Activated CD4-positive, alpha-beta T cell treated with anti-CD3 and anti-CD28 coated beads for 36 hours (primary cell): ENCODE measurements at regions of chr20 and their contacts with region 1.

Region 1: DNA sequence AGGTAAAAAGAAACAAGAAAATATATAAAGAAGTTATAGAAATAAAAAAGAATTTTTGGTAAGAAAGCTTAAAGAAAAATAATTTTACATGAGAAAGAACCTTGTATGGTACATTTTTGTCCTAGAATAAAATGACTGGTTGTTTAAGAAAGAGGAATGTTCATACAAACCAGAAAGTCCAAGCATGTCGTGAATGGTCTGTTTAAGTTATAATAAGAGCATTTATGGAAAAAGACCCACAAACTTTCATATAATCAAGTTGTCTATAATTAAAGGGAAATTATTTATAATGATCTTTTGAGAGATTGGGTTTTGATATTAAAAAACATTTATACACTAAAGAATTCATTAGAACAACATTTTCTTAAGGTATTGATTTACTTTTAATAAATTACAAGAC is 27.8 kb upstream of the FAM110A start:
- DNase-seq: no peak
- ATAC-seq: no peak
- H3K4me3 Mint-ChIP-seq: no peak overlapping the region
- H3K27ac Mint-ChIP-seq: no peak overlapping the region
- H3K4me1 Mint-ChIP-seq: no peaks in the 10 kb centered on the region
- H3K27me3 Mint-ChIP-seq: peaks cover 14% of the 10 kb centered on the region

Region 2: GRCh38 chr20:956330-956951 is 150.7 kb after region 1 on chr20:
- CTCF ChIA-PET with region 1: interaction called, 28 read pairs
- POLR2A ChIA-PET with region 1: no interaction called
- intact Hi-C with region 1: no loop called
- DNase-seq: peak; percentile 84
- ATAC-seq: peak; percentile 89
- H3K4me3 Mint-ChIP-seq: no peak overlapping the region
- H3K27ac Mint-ChIP-seq: no peak overlapping the region
- H3K4me1 Mint-ChIP-seq: no peaks in the 10 kb centered on the region
- H3K27me3 Mint-ChIP-seq: peaks cover 20% of the 10 kb centered on the region